ENCODE measurements at regions of chr4 and their contacts with region 1.

Region 1: GRCh38 chr4:64539234-64539849 is 130.1 kb upstream of the TECRL start:
- DNase-seq: peak; percentile 41
- H3K4me3 Mint-ChIP-seq: no peak overlapping the region
- H3K27ac Mint-ChIP-seq: no peak overlapping the region
- H3K4me1 Mint-ChIP-seq: no peaks in the 10 kb centered on the region
- H3K27me3 Mint-ChIP-seq: no peaks in the 10 kb centered on the region
- CTCF ChIP-seq: peak; percentile 31

Region 2: DNA sequence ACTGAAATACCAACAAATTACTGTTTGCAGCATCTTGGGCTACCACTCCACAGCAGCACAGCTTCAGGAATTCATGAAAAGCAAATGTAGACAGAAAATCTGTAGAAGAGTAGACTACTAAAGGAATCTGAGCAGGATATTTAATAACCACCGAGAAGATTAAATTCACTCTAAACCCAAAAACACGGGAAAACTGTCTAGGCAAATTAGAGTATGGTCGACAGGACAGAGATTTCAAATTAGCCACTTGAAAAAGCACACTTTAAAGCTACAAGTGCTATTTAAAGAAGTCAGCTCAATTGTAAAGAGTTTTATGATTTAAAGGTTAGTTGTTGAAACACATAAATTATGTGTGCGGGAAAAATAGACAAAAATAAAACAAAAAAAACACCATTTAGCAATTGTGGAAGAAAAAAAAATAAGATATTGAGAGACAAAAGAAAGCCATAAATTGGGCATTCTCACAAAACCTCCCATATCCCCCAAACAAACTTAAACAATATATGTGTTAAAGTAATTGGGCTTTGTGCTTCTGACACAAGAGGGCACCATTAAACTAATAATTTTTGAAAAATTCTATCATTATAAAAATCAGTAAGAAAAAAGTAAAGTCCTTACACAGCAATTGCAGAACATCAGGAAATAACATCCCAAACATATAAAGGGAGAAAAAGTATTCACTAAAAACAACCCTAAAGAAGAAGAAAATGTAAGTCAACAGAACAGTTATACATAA is 1010.9 kb before region 1 on chr4:
- CTCF ChIA-PET with region 1: interaction called, 4 read pairs
- intact Hi-C with region 1: loop called (anchors 5 kb)
- DNase-seq: no peak
- H3K4me3 Mint-ChIP-seq: no peak overlapping the region
- H3K27ac Mint-ChIP-seq: no peak overlapping the region
- H3K4me1 Mint-ChIP-seq: no peaks in the 10 kb centered on the region
- H3K27me3 Mint-ChIP-seq: no peaks in the 10 kb centered on the region
- CTCF ChIP-seq: no peak

Measured in Calu3 (cell line).